Activated CD4-positive, alpha-beta memory T cell treated with anti-CD3 and anti-CD28 coated beads, Interleukin-2, amount 10 ng/mL, durations not matched to agents 7 days and 5 days (primary cell): ENCODE measurements at regions of chr12 and their contacts with region 1.

Region 1: GRCh38 chr12:108856428-108857157 is 790 bp downstream of the SSH1 start:
- DNase-seq: peak; percentile 67
- H3K4me3 Mint-ChIP-seq: peak overlapping the region; percentile 93
- H3K27ac Mint-ChIP-seq: peak overlapping the region; percentile 96
- H3K4me1 Mint-ChIP-seq: peaks cover 70% of the 10 kb centered on the region
- H3K27me3 Mint-ChIP-seq: peaks cover 2% of the 10 kb centered on the region

Region 2: DNA sequence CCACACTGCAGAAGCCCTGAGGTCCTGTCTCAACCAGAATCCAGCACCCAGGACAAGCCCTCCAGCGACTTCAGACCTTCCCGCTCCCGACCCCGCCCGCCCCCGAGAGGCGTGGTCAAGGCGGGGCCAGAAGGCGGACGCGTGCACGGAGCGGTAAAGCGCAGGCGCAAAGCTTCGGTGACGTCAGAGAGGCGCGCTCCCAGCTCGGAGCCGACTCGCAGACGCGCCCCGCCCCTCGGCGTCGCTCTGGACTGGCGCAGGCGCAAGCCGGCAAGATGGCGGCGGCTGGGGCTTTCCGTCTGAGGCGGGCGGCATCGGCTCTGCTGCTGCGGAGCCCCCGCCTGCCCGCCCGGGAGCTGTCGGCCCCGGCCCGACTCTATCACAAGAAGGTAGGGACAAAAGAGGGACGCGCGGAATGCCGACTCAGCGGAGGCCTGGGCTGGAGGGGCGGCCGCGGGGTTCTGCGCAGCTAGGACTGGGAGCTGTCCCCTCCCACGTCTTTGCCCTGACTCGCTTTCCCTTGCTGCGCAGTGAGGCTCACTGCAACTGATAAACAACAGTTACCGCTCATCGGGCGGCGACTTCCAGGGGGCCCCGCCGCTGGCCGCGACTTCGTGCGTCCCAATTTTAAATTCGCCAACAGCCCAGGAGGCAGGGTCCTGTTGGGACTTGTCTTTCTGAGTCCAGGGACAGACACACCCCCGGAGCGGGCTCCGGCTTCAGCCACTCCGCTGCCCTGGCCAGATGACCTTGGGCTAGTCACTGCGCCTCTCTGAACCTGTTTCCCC is 294.1 kb before region 1 on chr12 and contains the start of gene ISCU:
- CTCF ChIA-PET with region 1: interaction called, 3 read pairs
- POLR2A ChIA-PET with region 1: interaction called, 28 read pairs
- DNase-seq: peak; percentile 99
- H3K4me3 Mint-ChIP-seq: peak within 1 kb of the TSS; percentile 100
- H3K27ac Mint-ChIP-seq: peak within 1 kb of the TSS; percentile 99
- H3K4me1 Mint-ChIP-seq: peaks cover 63% of the 10 kb centered on the region
- H3K27me3 Mint-ChIP-seq: no peaks in the 10 kb centered on the region
- total RNA-seq, gene ISCU: 69.9 to 74.1 TPM

Region 3: GRCh38 chr12:108826101-108826806 is 30.3 kb before region 1 on chr12:
- CTCF ChIA-PET with region 1: no interaction called
- POLR2A ChIA-PET with region 1: interaction called, 19 read pairs
- DNase-seq: no peak
- H3K4me3 Mint-ChIP-seq: no peak overlapping the region
- H3K27ac Mint-ChIP-seq: peak overlapping the region; percentile 67
- H3K4me1 Mint-ChIP-seq: peaks cover 87% of the 10 kb centered on the region
- H3K27me3 Mint-ChIP-seq: no peaks in the 10 kb centered on the region

Region 4: GRCh38 chr12:108833355-108833733 is 23.2 kb before region 1 on chr12:
- CTCF ChIA-PET with region 1: interaction called, 12 read pairs
- POLR2A ChIA-PET with region 1: interaction called, 62 read pairs
- DNase-seq: no peak
- H3K4me3 Mint-ChIP-seq: no peak overlapping the region
- H3K27ac Mint-ChIP-seq: peak overlapping the region; percentile 61
- H3K4me1 Mint-ChIP-seq: peaks cover 88% of the 10 kb centered on the region
- H3K27me3 Mint-ChIP-seq: no peaks in the 10 kb centered on the region

Region 5: DNA sequence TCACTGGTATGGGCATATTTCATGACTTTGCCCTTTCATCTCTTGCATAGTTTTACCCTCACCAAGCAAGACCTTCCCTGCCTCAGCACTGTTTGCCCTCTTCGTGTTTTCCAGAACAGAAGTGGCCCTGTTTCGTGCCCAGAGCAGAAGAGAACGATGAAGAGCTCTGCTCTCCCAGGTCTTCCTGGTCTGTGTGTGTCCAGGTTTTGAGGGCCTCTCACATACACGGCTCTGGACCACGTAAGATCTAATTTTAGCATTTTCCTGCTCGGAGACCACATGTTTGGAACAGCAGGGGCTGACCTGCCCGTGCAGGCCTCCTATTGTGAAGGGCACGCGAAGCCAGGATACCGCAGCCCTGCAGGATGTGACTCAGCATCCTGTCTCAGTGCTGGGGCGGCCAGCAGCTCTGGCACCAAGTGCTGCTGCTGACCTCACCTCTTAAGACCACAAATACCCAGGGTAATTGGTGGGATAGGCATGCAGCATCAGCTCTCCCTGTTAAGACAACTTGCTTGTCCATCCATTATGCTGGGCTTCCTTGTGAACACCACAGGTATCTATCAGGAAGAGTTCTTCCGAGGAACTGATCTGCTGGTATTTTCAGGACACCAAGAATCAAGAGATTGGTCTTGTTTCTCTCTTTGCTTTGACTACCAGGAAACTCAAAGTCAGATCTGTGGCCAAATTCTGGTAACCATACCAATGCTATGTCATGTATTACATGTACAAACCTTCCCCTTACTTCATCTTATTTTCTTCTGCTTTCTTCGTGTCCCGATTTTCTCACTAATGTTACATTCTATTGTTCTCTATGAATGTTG is 18.2 kb before region 1 on chr12:
- CTCF ChIA-PET with region 1: interaction called, 12 read pairs
- POLR2A ChIA-PET with region 1: interaction called, 62 read pairs
- DNase-seq: peak; percentile 90
- H3K4me3 Mint-ChIP-seq: peak overlapping the region; percentile 35
- H3K27ac Mint-ChIP-seq: peak overlapping the region; percentile 81
- H3K4me1 Mint-ChIP-seq: peaks cover 70% of the 10 kb centered on the region
- H3K27me3 Mint-ChIP-seq: no peaks in the 10 kb centered on the region

Region 6: GRCh38 chr12:108884116-108885012 is 27.8 kb after region 1 on chr12:
- CTCF ChIA-PET with region 1: interaction called, 10 read pairs
- POLR2A ChIA-PET with region 1: interaction called, 4 read pairs
- DNase-seq: peak; percentile 72
- H3K4me3 Mint-ChIP-seq: no peak overlapping the region
- H3K27ac Mint-ChIP-seq: no peak overlapping the region
- H3K4me1 Mint-ChIP-seq: peaks cover 5% of the 10 kb centered on the region
- H3K27me3 Mint-ChIP-seq: peaks cover 3% of the 10 kb centered on the region